B cell (primary cell): ENCODE measurements at regions of chr19 and their contacts with region 1.

Region 1: DNA sequence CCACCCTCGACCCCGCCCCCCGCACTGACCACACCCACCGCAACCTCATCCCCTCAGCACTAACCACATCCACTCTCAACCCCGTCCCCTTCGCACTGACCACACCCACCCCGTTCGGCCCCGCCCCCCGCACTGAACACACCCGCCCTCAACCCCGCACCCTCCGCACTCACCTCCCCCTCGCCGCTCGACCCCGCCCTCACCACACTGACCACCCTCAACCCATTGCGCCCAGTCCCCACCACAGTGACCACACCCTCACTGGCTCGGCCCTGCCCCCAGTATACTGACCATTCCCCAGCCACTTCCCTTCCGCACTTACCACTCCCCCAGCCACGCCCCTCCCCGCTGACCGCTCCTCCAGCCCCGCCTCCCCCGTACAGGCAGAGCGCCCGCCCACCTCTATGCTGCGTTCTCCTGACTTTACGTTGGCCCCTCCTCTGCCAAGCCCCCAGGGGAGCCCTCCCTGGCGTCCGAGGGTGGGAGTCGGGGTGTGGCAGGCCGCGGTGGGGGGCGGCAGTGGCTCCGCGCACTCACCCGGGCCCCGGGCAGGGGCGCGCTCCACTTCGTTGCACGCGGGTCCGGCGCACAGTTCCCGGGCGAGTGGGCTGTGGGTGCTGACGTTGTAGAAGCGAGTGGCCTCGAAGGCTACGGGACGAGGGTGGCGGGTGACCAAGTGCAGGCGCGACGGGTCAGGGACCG is 8.5 kb downstream of the F2RL3 start:
- DNase-seq: peak; percentile 85
- ATAC-seq: peak; percentile 68
- H3K4me3 ChIP-seq: peak overlapping the region in 4 of 5 experiments; percentile 47 to 84 (median 65)
- H3K4me3 Mint-ChIP-seq: peak overlapping the region; percentile 88
- H3K27ac ChIP-seq: no peak overlapping the region
- H3K27ac Mint-ChIP-seq: peak overlapping the region; percentile 46
- H3K4me1 ChIP-seq: peaks cover 35 to 51% of the 10 kb centered on the region in 2 donors
- H3K4me1 Mint-ChIP-seq: peaks cover 39% of the 10 kb centered on the region
- H3K27me3 ChIP-seq: peaks cover 0 to 11% (median 2%) of the 10 kb centered on the region in 4 experiments
- H3K27me3 Mint-ChIP-seq: no peaks in the 10 kb centered on the region
- CTCF ChIP-seq: no peak

Region 2: GRCh38 chr19:16771618-16772017 is 125.7 kb before region 1 on chr19:
- CTCF ChIA-PET with region 1: interaction called, 3 read pairs
- POLR2A ChIA-PET with region 1: no interaction called
- intact Hi-C with region 1: loop called (anchors 1 kb)
- DNase-seq: peak; percentile 85
- ATAC-seq: peak; percentile 86
- H3K4me3 ChIP-seq: no peak overlapping the region
- H3K4me3 Mint-ChIP-seq: no peak overlapping the region
- H3K27ac ChIP-seq: no peak overlapping the region
- H3K27ac Mint-ChIP-seq: no peak overlapping the region
- H3K4me1 ChIP-seq: no peaks in the 10 kb centered on the region
- H3K4me1 Mint-ChIP-seq: peaks cover 3% of the 10 kb centered on the region
- H3K27me3 ChIP-seq: peaks cover 0 to 5% (median 1%) of the 10 kb centered on the region in 4 experiments
- H3K27me3 Mint-ChIP-seq: peaks cover 17% of the 10 kb centered on the region
- CTCF ChIP-seq: peak; percentile 86

Region 3: DNA sequence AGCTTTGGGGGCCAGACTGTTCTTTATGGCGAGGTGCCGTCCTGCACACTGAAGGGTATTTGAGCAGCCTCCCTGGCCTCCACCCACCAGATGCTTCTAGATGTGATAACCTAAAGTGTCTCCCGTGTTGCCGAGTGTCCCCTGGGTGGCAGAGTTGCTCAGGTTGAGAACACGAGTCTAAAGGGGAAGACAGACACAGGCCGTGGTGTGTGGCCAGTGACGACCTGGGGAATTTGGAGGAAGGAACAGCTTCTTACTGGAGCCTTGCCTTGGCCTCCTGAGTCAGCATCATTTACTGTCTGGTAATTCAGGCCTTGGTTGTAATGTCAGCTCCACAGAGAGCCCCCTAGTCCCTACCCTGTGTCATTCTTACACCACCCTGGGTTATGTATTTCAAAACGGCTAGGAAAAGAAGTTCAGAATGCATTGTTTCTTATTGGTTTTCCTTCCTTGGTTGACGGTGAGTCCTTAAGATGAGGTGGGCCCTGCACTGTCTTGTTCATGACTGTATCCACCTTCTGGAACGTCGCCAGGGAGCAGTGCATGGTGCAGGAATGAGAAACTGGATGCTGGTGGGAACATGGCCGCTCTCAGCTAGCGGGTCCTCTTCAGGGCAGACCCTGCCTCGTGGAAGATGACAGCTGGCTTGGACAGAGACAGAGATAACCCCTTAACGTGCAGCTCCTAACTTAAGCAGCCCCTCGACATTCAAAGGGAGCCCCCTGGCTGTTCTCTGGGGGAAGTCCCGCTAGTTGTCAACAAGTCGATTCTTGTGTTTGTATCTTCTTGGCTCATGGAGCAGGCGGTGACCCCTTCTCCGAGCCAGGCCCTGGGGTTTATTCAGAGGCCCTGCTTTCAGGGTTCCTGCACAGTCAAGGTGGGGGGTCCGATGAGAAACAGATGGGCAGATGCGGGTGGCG is 60.9 kb before region 1 on chr19:
- CTCF ChIA-PET with region 1: interaction called, 3 read pairs
- POLR2A ChIA-PET with region 1: no interaction called
- intact Hi-C with region 1: loop called (anchors 2 kb)
- DNase-seq: peak; percentile 69
- ATAC-seq: peak; percentile 53
- H3K4me3 ChIP-seq: no peak overlapping the region
- H3K4me3 Mint-ChIP-seq: peak overlapping the region; percentile 10
- H3K27ac ChIP-seq: peak overlapping the region in 1 of 2 donors; percentile 5
- H3K27ac Mint-ChIP-seq: peak overlapping the region; percentile 59
- H3K4me1 ChIP-seq: peaks cover 23 to 28% of the 10 kb centered on the region in 2 donors
- H3K4me1 Mint-ChIP-seq: peaks cover 36% of the 10 kb centered on the region
- H3K27me3 ChIP-seq: no peaks in the 10 kb centered on the region
- H3K27me3 Mint-ChIP-seq: no peaks in the 10 kb centered on the region
- CTCF ChIP-seq: no peak

Region 4: DNA sequence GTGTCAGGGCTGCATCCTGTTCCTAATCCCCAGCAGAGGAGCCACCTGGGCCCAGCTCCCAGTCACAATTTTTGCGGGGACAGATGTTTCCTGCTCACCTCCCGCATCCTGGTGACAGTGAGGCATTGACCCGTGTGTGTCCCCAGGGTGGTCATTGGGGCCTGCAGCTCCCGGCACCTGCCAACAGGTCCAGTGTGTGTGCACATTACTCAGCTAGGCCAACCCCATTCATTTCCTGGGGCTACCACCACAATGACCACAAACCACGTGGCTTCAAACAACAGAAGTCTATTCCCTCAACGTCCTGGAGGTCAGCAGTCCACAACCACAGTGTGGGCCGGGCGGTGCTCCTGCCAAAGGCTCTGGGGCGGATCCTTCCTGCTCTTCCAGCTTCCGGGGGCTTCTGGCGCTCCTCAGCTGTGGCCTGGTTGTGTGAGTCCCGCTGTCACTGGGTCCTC is 20.4 kb before region 1 on chr19:
- CTCF ChIA-PET with region 1: no interaction called
- POLR2A ChIA-PET with region 1: no interaction called
- intact Hi-C with region 1: no loop called
- DNase-seq: no peak
- ATAC-seq: no peak
- H3K4me3 ChIP-seq: no peak overlapping the region
- H3K4me3 Mint-ChIP-seq: no peak overlapping the region
- H3K27ac ChIP-seq: no peak overlapping the region
- H3K27ac Mint-ChIP-seq: peak overlapping the region; percentile 37
- H3K4me1 ChIP-seq: no peaks in the 10 kb centered on the region
- H3K4me1 Mint-ChIP-seq: peaks cover 20% of the 10 kb centered on the region
- H3K27me3 ChIP-seq: no peaks in the 10 kb centered on the region
- H3K27me3 Mint-ChIP-seq: no peaks in the 10 kb centered on the region
- CTCF ChIP-seq: no peak

Region 5: GRCh38 chr19:16910750-16911445 is 13.6 kb after region 1 on chr19:
- CTCF ChIA-PET with region 1: no interaction called
- POLR2A ChIA-PET with region 1: interaction called, 10 read pairs
- intact Hi-C with region 1: no loop called
- DNase-seq: no peak
- ATAC-seq: no peak
- H3K4me3 ChIP-seq: no peak overlapping the region
- H3K4me3 Mint-ChIP-seq: no peak overlapping the region
- H3K27ac ChIP-seq: no peak overlapping the region
- H3K27ac Mint-ChIP-seq: no peak overlapping the region
- H3K4me1 ChIP-seq: no peaks in the 10 kb centered on the region
- H3K4me1 Mint-ChIP-seq: no peaks in the 10 kb centered on the region
- H3K27me3 ChIP-seq: peaks cover 0 to 2% (median 0%) of the 10 kb centered on the region in 4 experiments
- H3K27me3 Mint-ChIP-seq: peaks cover 3% of the 10 kb centered on the region
- CTCF ChIP-seq: no peak

Region 6: GRCh38 chr19:16928916-16929315 is 31.6 kb after region 1 on chr19:
- CTCF ChIA-PET with region 1: no interaction called
- POLR2A ChIA-PET with region 1: no interaction called
- intact Hi-C with region 1: no loop called
- DNase-seq: no peak
- ATAC-seq: no peak
- H3K4me3 ChIP-seq: no peak overlapping the region
- H3K4me3 Mint-ChIP-seq: no peak overlapping the region
- H3K27ac ChIP-seq: no peak overlapping the region
- H3K27ac Mint-ChIP-seq: no peak overlapping the region
- H3K4me1 ChIP-seq: no peaks in the 10 kb centered on the region
- H3K4me1 Mint-ChIP-seq: no peaks in the 10 kb centered on the region
- H3K27me3 ChIP-seq: peaks cover 0 to 9% (median 0%) of the 10 kb centered on the region in 4 experiments
- H3K27me3 Mint-ChIP-seq: peaks cover 28% of the 10 kb centered on the region
- CTCF ChIP-seq: no peak